ENCODE measurements at regions of chr10 and their contacts with region 1.

Region 1: DNA sequence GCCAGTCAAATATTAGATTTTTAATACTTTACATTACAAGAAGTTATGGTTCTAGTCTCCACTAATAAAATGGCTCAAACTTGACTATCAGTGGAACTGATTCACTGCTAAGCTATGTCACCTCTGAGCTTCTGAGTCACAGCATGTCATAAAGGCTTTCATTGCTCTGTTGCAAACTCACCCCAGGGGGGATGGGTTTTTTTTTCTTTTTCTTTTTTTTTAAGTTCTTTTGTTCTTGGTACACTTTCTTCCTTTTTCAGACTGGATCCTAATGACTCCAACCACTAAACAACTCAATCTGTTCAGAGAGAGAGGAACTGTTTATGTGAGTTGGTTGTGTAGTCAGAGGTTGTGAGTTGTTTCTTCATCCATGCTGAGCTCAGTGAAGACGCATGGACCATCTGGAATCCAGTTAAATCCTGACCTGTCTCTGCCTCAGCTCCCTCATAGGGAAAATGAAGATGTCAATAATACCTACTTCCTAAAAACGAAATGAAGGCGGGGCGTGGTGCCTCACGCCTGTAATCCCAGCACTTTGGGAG is 11.0 kb downstream of the MYOF start:
- DNase-seq: peak; percentile 94
- ATAC-seq: peak; percentile 44
- H3K4me3 ChIP-seq: no peak overlapping the region
- H3K27ac ChIP-seq: peak overlapping the region; percentile 99
- H3K4me1 ChIP-seq: peaks cover 89% of the 10 kb centered on the region
- H3K27me3 ChIP-seq: no peaks in the 10 kb centered on the region
- CTCF ChIP-seq: no peak

Region 2: GRCh38 chr10:92567952-92568600 is 903.1 kb before region 1 on chr10:
- CTCF ChIA-PET with region 1: no interaction called
- POLR2A ChIA-PET with region 1: interaction called, 20 read pairs
- intact Hi-C with region 1: no loop called
- DNase-seq: peak; percentile 73
- ATAC-seq: peak; percentile 86
- H3K4me3 ChIP-seq: no peak overlapping the region
- H3K27ac ChIP-seq: peak overlapping the region; percentile 30
- H3K4me1 ChIP-seq: peaks cover 32% of the 10 kb centered on the region
- H3K27me3 ChIP-seq: no peaks in the 10 kb centered on the region
- CTCF ChIP-seq: no peak

Region 3: GRCh38 chr10:93357680-93358079 is 113.5 kb before region 1 on chr10:
- CTCF ChIA-PET with region 1: no interaction called
- POLR2A ChIA-PET with region 1: interaction called, 14 read pairs
- intact Hi-C with region 1: no loop called
- DNase-seq: peak; percentile 34
- ATAC-seq: peak; percentile 54; the same call in 1 of the 2 replicates
- H3K4me3 ChIP-seq: no peak overlapping the region
- H3K27ac ChIP-seq: no peak overlapping the region
- H3K4me1 ChIP-seq: no peaks in the 10 kb centered on the region
- H3K27me3 ChIP-seq: no peaks in the 10 kb centered on the region
- CTCF ChIP-seq: peak; percentile 52

Region 4: DNA sequence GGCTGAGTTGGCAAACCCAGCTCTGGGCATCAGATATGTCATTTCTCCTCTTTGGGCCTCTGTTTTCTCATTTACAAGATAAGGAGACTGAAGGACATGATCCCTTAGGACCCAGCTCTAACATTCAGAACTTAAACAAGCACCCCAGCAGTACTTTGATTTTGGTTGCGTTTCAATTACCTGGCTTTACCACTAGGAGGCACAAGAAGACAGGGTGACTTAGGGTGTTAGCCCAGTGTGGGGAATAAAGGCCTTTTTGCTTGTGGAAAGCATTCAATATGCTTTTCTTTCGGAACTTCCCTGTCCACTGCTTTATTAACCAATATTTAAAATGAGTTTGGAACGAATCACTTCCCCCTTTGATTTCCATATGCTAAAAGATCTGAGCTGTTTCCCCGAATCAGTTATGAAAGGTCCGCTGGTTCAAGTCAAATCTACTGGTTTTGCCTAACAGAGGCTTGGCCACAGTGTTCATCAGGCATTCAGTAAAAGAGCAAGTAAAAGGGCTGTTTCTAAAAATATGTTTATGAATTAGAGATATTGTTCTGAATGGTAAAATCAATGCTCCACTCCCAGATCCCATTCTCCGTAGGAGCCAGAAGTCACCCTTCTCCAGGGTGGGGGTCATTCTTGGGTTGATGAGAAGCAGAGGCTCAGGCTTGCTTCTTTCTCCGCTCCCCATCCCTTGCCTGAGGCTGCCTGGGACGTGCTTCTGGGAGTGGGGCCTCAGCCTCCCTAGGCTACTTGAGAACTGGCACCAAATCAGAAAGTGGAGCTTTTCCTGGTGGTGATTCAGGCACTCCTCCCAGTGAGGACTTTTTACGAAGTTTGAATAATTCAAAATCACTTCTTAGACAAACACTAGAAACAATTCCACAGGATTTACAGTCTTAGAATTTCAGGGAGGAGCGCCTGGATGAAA is 94.5 kb before region 1 on chr10:
- CTCF ChIA-PET with region 1: no interaction called
- POLR2A ChIA-PET with region 1: interaction called, 40 read pairs
- intact Hi-C with region 1: no loop called
- DNase-seq: peak; percentile 88
- ATAC-seq: peak; percentile 76
- H3K4me3 ChIP-seq: peak overlapping the region; percentile 34; the same call in 1 of the 2 replicates
- H3K27ac ChIP-seq: peak overlapping the region; percentile 94
- H3K4me1 ChIP-seq: peaks cover 43% of the 10 kb centered on the region
- H3K27me3 ChIP-seq: no peaks in the 10 kb centered on the region
- CTCF ChIP-seq: peak; percentile 84

Region 5: DNA sequence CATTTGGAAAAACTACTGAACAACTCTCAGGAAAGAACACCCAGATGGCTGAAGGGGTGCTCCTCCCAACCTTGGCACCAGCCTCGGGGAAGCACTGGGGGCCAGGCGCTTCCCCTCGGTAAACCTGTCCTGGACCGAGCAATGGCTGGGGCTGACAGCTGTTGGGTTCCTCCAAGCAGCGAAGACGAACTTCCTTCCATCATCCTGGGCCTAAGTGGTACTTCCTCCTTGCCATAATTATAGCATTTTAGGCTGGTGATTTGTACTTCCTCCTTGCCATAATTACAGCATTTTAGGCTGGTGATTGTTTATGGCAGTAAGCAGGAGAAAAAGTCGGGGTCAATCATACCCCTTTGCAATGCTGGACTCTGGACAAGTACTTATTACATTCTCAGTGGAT is 58.4 kb before region 1 on chr10:
- CTCF ChIA-PET with region 1: no interaction called
- POLR2A ChIA-PET with region 1: interaction called, 12 read pairs
- intact Hi-C with region 1: no loop called
- DNase-seq: no peak
- ATAC-seq: no peak
- H3K4me3 ChIP-seq: no peak overlapping the region
- H3K27ac ChIP-seq: no peak overlapping the region
- H3K4me1 ChIP-seq: no peaks in the 10 kb centered on the region
- H3K27me3 ChIP-seq: no peaks in the 10 kb centered on the region
- CTCF ChIP-seq: no peak

Region 6: GRCh38 chr10:93437088-93437945 is 33.9 kb before region 1 on chr10:
- CTCF ChIA-PET with region 1: no interaction called
- POLR2A ChIA-PET with region 1: interaction called, 4 read pairs
- intact Hi-C with region 1: loop called (anchors 2 kb)
- DNase-seq: peak; percentile 91
- ATAC-seq: peak; percentile 92
- H3K4me3 ChIP-seq: peak overlapping the region; percentile 46
- H3K27ac ChIP-seq: peak overlapping the region; percentile 99
- H3K4me1 ChIP-seq: peaks cover 45% of the 10 kb centered on the region
- H3K27me3 ChIP-seq: no peaks in the 10 kb centered on the region
- CTCF ChIP-seq: no peak

Region 7: GRCh38 chr10:93445097-93445960 is 25.9 kb before region 1 on chr10:
- CTCF ChIA-PET with region 1: interaction called, 5 read pairs
- POLR2A ChIA-PET with region 1: interaction called, 34 read pairs
- intact Hi-C with region 1: no loop called
- DNase-seq: peak; percentile 93
- ATAC-seq: peak; percentile 95
- H3K4me3 ChIP-seq: no peak overlapping the region
- H3K27ac ChIP-seq: peak overlapping the region; percentile 80
- H3K4me1 ChIP-seq: peaks cover 53% of the 10 kb centered on the region
- H3K27me3 ChIP-seq: no peaks in the 10 kb centered on the region
- CTCF ChIP-seq: no peak